IMR-90 (cell line): ENCODE measurements at regions of chr13 and their contacts with region 1.

Region 1: DNA sequence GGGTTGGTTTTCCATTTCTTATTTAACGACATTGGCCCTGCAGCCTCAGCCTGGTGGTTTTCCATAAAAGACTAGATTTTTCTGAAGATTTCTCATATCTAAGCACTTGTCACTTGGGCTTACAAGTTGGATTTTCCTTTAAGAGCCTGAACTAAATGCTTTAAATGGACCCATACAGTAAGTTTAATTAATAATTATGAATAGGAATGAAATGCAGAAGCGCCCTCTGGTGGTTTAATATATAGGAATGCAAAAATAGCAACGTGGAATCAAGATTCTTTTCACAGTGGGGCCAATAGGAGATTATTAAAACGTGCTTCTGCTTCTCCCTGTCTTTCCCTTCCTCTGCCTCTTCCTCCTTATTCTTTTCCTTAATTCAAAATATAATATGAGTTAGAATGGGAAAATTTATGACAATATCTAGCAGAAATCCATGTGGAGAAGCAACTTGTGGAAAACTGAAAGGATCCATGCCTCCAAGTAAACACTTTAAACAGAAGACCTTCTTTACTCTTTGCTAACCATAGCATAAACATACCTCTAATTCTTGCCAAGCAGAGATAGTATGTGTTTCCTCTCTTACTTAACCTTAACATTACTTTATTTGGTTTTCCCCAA is 324.0 kb downstream of the GPC5 start:
- DNase-seq: peak; percentile 18
- ATAC-seq: no peak
- H3K4me3 ChIP-seq: no peak overlapping the region
- H3K27ac ChIP-seq: no peak overlapping the region
- H3K4me1 ChIP-seq: no peaks in the 10 kb centered on the region
- H3K27me3 ChIP-seq: no peaks in the 10 kb centered on the region
- CTCF ChIP-seq: peak; percentile 58
- POLR2A ChIP-seq: no peak
- RAD21 ChIP-seq: 0 out of 2 replicates have a peak, but pooled peaks have one; percentile 40

Region 2: GRCh38 chr13:90710164-90710759 is 1012.1 kb before region 1 on chr13:
- CTCF ChIA-PET with region 1: no interaction called
- POLR2A ChIA-PET with region 1: no interaction called
- dilution Hi-C with region 1: no loop called
- in situ Hi-C with region 1: no loop called
- intact Hi-C with region 1: no loop called
- DNase-seq: no peak
- ATAC-seq: no peak
- H3K4me3 ChIP-seq: no peak overlapping the region
- H3K27ac ChIP-seq: no peak overlapping the region
- H3K4me1 ChIP-seq: no peaks in the 10 kb centered on the region
- H3K27me3 ChIP-seq: no peaks in the 10 kb centered on the region
- CTCF ChIP-seq: no peak
- POLR2A ChIP-seq: no peak
- RAD21 ChIP-seq: no peak

Region 3: DNA sequence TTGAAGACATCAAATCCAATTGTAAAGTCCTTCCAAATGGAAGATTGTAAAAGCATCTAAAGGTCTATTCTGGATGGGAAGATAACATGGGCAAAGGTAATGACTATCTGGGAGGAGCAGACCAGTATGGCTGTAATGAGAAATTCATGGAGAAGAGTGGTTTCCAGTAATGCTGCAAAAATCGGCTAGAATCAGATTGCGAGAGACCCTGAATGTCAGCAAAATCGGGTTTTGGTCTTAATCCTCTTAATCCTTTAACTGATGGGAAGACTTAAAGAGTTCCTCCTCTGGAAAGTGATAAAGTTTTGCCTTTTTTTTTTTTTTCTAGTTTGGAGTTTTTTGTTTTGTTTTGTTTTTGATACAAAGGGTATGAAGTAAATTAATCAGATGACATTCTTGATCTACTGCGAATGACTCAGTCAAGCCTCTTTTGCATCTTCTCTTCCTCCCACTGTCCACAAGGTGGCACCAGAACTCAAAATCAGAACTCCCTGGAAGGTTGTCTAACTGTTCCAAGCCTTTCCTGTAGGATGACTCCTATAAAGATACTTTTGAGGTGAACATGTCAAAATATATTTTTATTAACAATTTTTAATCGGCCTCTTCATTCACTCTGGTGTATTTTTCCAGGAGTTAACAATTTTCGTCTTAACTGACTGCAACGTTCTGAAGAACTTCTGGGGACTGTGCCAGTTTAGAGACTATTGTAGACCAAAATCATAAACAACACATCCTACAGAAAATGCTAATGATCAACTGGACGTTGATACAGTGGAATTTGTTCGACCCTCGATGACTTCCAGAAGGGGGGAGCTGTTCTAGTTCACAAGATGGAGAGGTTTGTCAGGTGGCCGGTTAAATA is 588.2 kb before region 1 on chr13:
- CTCF ChIA-PET with region 1: no interaction called
- POLR2A ChIA-PET with region 1: no interaction called
- dilution Hi-C with region 1: no loop called
- in situ Hi-C with region 1: no loop called
- intact Hi-C with region 1: loop called (anchors 2 kb)
- DNase-seq: peak; percentile 54
- ATAC-seq: peak; percentile 59
- H3K4me3 ChIP-seq: no peak overlapping the region
- H3K27ac ChIP-seq: no peak overlapping the region
- H3K4me1 ChIP-seq: no peaks in the 10 kb centered on the region
- H3K27me3 ChIP-seq: no peaks in the 10 kb centered on the region
- CTCF ChIP-seq: peak; percentile 69
- POLR2A ChIP-seq: no peak
- RAD21 ChIP-seq: peak; percentile 57

Region 4: GRCh38 chr13:91375116-91375729 is 347.2 kb before region 1 on chr13:
- CTCF ChIA-PET with region 1: no interaction called
- POLR2A ChIA-PET with region 1: no interaction called
- dilution Hi-C with region 1: no loop called
- in situ Hi-C with region 1: no loop called
- intact Hi-C with region 1: loop called (anchors 1 kb)
- DNase-seq: peak; percentile 8
- ATAC-seq: peak; percentile 71; the same call in 1 of the 2 replicates
- H3K4me3 ChIP-seq: no peak overlapping the region
- H3K27ac ChIP-seq: no peak overlapping the region
- H3K4me1 ChIP-seq: no peaks in the 10 kb centered on the region
- H3K27me3 ChIP-seq: no peaks in the 10 kb centered on the region
- CTCF ChIP-seq: peak; percentile 49
- POLR2A ChIP-seq: no peak
- RAD21 ChIP-seq: peak; percentile 55

Region 5: GRCh38 chr13:91389186-91389585 is 333.2 kb before region 1 on chr13:
- CTCF ChIA-PET with region 1: interaction called, 5 read pairs
- POLR2A ChIA-PET with region 1: no interaction called
- dilution Hi-C with region 1: no loop called
- in situ Hi-C with region 1: loop called (anchors 5 kb)
- intact Hi-C with region 1: no loop called
- DNase-seq: no peak
- ATAC-seq: no peak
- H3K4me3 ChIP-seq: no peak overlapping the region
- H3K27ac ChIP-seq: no peak overlapping the region
- H3K4me1 ChIP-seq: no peaks in the 10 kb centered on the region
- H3K27me3 ChIP-seq: peaks cover 2% of the 10 kb centered on the region
- CTCF ChIP-seq: no peak
- POLR2A ChIP-seq: no peak
- RAD21 ChIP-seq: no peak